ENCODE measurements at regions of chr19 and their contacts with region 1.

Region 1: DNA sequence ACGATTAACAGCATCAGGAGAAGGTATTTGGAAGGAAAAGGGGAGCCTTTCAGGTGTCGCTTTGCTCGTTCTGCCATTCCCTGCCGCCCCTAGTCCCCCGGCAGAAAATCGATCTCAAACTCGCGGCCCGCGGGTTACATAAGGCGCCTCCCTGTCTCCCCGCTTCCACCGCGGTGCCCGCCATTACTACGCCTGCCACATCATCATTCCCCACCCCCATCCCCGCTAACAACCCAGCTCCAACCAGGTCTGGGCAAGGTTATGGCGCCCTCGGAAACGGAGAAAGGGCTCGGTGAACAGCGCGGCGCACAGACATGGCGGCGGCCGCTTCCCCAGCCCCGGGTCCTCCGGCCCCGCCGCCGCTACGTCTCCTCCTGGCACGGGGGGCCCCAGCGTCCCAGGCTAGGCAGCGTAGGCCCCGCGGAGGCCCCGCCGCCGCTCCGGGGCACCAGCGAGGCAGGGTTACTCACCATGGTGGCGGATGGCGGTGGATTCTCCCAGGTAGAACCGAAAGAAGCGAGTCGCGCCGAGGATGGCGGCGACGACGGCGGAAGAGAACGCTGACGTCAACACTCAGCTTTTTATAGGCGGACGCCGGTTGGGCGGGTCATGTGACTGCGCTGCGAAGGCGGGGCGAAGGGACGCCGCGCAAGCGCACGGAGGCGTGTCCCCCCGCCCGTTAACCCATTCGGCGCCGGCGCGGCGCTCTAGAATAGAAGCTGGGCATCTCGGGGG is at the start of gene EEF2:
- DNase-seq: peak; percentile 82 to 96 (median 90)
- ATAC-seq: peak; percentile 54
- H3K4me3 ChIP-seq: peak within 1 kb of the TSS; percentile 70 to 78
- H3K4me3 Mint-ChIP-seq: peak within 1 kb of the TSS; percentile 92
- H3K27ac ChIP-seq: peak within 1 kb of the TSS; percentile 83 to 85
- H3K27ac Mint-ChIP-seq: peak within 1 kb of the TSS; percentile 97
- H3K4me1 ChIP-seq: peaks cover 52% of the 10 kb centered on the region
- H3K4me1 Mint-ChIP-seq: peaks cover 57% of the 10 kb centered on the region
- H3K27me3 ChIP-seq: no peaks in the 10 kb centered on the region
- H3K27me3 Mint-ChIP-seq: no peaks in the 10 kb centered on the region
- CTCF ChIP-seq: no peak
- total RNA-seq, gene EEF2: 2,844 to 2,933 TPM

Region 2: DNA sequence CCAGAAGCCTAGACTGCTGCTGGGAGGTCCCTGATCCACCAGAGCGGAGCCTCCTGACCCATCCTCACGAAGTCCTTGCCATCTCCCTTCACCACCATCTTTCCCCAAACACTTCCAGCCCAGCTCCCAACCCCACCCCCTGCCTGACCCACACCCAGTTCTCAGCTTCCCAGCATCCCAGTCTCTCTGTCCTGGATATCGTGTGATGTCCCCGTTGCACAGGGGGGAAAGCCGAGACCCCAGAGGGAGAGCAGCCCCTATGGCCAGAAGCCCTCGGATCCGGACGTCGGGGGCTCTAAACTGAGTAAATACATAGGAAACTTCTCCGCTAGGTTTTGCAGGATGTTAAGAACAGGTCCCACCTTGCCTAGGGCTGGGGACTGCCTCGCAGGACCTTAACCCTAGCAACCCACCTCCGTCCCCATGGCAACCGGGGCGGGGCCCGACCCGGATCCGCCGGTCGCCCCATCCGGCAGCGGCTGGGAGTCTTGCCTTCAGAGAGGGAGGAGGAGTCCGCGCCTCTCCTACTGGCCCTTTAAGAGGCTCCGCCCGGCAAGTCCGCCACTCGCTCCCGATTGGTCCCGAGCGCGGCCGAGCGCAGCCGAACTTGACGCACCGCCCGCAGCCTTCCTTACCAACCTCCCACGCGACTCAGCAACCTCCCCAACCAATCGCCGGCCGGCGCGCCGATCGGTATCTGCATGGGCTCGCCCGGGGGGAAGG is 412.8 kb before region 1 on chr19:
- CTCF ChIA-PET with region 1: no interaction called
- POLR2A ChIA-PET with region 1: no interaction called
- intact Hi-C with region 1: loop called (anchors 5 kb)
- DNase-seq: peak; percentile 98 to 100 (median 99)
- ATAC-seq: peak; percentile 95
- H3K4me3 ChIP-seq: peak overlapping the region; percentile 66 to 68
- H3K4me3 Mint-ChIP-seq: peak overlapping the region; percentile 77
- H3K27ac ChIP-seq: peak overlapping the region; percentile 60 to 65
- H3K27ac Mint-ChIP-seq: no peak overlapping the region
- H3K4me1 ChIP-seq: peaks cover 15% of the 10 kb centered on the region
- H3K4me1 Mint-ChIP-seq: peaks cover 18% of the 10 kb centered on the region
- H3K27me3 ChIP-seq: no peaks in the 10 kb centered on the region
- H3K27me3 Mint-ChIP-seq: no peaks in the 10 kb centered on the region
- CTCF ChIP-seq: no peak

Region 3: GRCh38 chr19:3801412-3802096 is 183.5 kb before region 1 on chr19:
- CTCF ChIA-PET with region 1: no interaction called
- POLR2A ChIA-PET with region 1: no interaction called
- intact Hi-C with region 1: no loop called
- DNase-seq: peak; percentile 38 to 84 (median 66)
- ATAC-seq: peak; percentile 69
- H3K4me3 ChIP-seq: peak overlapping the region; percentile 39 to 60
- H3K4me3 Mint-ChIP-seq: peak overlapping the region; percentile 56
- H3K27ac ChIP-seq: no peak overlapping the region
- H3K27ac Mint-ChIP-seq: peak overlapping the region; percentile 22
- H3K4me1 ChIP-seq: peaks cover 49% of the 10 kb centered on the region
- H3K4me1 Mint-ChIP-seq: peaks cover 43% of the 10 kb centered on the region
- H3K27me3 ChIP-seq: no peaks in the 10 kb centered on the region
- H3K27me3 Mint-ChIP-seq: no peaks in the 10 kb centered on the region
- CTCF ChIP-seq: no peak

Region 4: DNA sequence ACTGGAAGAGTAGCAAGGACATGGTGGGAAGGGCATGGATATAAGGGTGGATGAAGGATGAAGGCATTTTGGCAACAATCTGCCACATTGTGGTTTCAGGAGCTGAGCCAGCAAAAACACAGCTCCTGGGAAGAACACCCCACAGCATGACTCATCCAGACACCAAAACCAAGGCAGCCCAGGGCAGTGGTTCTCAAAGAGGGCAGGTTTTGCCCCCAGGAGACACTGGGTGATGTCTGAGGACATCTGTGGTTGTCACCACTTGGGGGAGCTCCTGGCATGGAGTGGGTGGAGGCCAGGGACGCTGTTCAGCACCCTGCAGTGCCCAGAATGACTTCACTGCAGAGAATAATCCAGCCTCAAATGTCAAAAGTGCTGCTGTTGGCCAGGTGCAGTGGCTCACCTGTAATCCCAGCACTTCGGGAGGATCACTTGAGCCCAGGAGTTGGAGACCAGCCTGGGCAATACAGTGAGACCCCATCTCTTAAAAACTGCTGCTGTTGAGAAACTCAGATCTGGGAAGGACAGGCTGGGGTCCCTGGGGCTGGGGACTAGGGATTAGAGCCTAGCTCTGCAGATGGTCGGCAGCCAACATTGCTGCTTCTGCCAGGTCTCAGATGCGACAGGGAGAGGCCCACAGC is 132.3 kb before region 1 on chr19:
- CTCF ChIA-PET with region 1: no interaction called
- POLR2A ChIA-PET with region 1: no interaction called
- intact Hi-C with region 1: loop called in 1 of 2 experiments (anchors 2 kb)
- DNase-seq: peak in 8 of 9 experiments; percentile 27 to 68 (median 54)
- ATAC-seq: peak; percentile 57
- H3K4me3 ChIP-seq: no peak overlapping the region
- H3K4me3 Mint-ChIP-seq: no peak overlapping the region
- H3K27ac ChIP-seq: no peak overlapping the region
- H3K27ac Mint-ChIP-seq: no peak overlapping the region
- H3K4me1 ChIP-seq: no peaks in the 10 kb centered on the region
- H3K4me1 Mint-ChIP-seq: no peaks in the 10 kb centered on the region
- H3K27me3 ChIP-seq: no peaks in the 10 kb centered on the region
- H3K27me3 Mint-ChIP-seq: no peaks in the 10 kb centered on the region
- CTCF ChIP-seq: peak; percentile 37

Region 5: DNA sequence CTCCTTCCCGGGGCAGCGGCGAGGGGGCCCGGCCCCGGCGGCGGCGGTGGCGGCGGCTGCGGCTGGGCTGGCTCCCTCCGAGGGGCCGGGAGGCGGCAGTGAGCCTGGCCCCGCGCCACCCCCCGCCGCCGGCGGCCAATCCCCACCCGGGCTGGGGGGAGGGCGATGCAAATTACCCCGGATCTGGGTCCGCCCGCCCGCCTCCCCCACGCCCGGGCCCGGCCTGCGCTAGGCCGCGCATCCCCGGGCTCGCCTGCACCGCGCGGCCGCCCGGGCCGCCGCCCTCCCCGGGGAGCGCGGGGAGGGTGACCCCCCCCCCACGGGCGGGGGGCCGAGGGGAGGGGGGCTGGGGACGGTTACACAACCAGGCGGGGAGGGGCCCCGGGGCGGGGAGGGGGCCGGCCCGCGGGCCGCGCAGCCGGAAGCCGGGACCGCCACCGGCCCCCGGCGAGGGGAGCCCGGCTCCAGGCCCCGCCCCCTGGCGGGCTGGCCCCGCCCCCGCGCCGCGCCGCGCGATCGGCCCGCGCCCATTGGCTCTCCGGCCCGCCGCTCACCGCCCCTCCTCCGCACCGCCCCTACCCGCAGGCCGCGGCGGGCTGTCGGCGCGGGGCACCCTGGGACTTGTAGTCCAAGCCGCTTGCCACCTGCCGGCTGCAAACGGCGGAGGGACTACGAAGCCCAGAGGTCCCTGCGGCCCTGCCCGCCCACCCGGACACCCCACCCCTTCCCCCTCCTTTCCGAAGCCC is 80.5 kb after region 1 on chr19:
- CTCF ChIA-PET with region 1: interaction called, 7 read pairs
- POLR2A ChIA-PET with region 1: interaction called, 6 read pairs
- intact Hi-C with region 1: loop called (anchors 1 kb)
- DNase-seq: peak; percentile 94 to 99 (median 97)
- ATAC-seq: peak; percentile 72
- H3K4me3 ChIP-seq: peak overlapping the region; percentile 86 to 89
- H3K4me3 Mint-ChIP-seq: peak overlapping the region; percentile 73
- H3K27ac ChIP-seq: no peak overlapping the region
- H3K27ac Mint-ChIP-seq: no peak overlapping the region
- H3K4me1 ChIP-seq: peaks cover 58% of the 10 kb centered on the region
- H3K4me1 Mint-ChIP-seq: peaks cover 40% of the 10 kb centered on the region
- H3K27me3 ChIP-seq: no peaks in the 10 kb centered on the region
- H3K27me3 Mint-ChIP-seq: no peaks in the 10 kb centered on the region
- CTCF ChIP-seq: no peak

Region 6: DNA sequence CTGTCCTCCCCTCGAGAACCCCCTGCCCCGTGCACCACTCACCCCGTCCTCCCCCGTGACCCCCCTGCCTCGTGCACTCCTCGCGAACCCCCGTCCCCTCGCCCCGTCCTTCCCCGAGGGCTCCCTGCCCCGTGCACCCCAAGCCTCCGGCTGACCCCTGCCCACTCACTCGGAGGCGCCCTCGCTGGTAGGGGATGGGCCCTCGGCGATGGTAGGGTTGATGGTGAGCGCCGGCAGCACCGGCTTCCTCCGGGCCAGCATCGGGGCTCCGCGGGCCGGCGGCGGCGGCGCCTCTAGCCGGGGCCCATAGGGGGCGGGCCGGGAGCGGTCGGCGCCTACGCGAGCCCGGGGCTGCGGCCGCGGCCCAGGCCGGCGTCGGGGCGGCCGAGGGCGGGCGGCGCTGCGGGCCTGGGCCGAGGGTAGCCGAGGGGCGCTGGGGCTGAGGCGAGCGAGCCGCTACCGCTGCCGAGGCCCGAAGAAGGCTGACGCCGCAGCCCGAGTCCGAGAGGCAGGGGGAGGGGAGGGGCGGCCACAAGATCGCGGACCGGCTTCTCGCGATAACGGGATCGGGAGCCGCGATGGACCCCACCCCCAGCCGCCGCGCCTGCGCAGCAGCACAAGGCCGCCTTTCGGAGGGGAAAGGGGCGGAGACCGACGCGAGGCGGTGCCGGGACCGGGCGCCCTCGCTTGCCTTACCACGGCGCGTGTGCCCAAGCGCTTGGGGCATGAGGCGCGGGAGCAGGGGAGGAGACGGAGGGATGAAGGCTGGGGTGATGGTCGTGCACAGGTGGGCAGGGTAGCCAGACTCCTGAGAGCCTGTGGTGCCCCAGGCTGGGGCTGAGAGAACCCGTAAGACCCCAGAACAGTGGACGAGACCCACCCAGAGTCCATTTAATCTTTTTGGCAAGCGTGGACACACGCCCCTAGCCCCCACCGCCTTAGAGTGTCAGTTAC is 138.8 kb after region 1 on chr19 and contains the start of gene MAP2K2:
- CTCF ChIA-PET with region 1: interaction called, 4 read pairs
- POLR2A ChIA-PET with region 1: no interaction called
- intact Hi-C with region 1: loop called (anchors 1 kb)
- DNase-seq: peak; percentile 91 to 98 (median 97)
- ATAC-seq: peak; percentile 96
- H3K4me3 ChIP-seq: peak within 1 kb of the TSS; percentile 57 to 72
- H3K4me3 Mint-ChIP-seq: peak within 1 kb of the TSS; percentile 93
- H3K27ac ChIP-seq: peak within 1 kb of the TSS; percentile 52 to 73
- H3K27ac Mint-ChIP-seq: peak within 1 kb of the TSS; percentile 91
- H3K4me1 ChIP-seq: peaks cover 17% of the 10 kb centered on the region
- H3K4me1 Mint-ChIP-seq: peaks cover 25% of the 10 kb centered on the region
- H3K27me3 ChIP-seq: no peaks in the 10 kb centered on the region
- H3K27me3 Mint-ChIP-seq: no peaks in the 10 kb centered on the region
- CTCF ChIP-seq: no peak
- total RNA-seq, gene MAP2K2: 73.9 to 76.8 TPM

Region 7: DNA sequence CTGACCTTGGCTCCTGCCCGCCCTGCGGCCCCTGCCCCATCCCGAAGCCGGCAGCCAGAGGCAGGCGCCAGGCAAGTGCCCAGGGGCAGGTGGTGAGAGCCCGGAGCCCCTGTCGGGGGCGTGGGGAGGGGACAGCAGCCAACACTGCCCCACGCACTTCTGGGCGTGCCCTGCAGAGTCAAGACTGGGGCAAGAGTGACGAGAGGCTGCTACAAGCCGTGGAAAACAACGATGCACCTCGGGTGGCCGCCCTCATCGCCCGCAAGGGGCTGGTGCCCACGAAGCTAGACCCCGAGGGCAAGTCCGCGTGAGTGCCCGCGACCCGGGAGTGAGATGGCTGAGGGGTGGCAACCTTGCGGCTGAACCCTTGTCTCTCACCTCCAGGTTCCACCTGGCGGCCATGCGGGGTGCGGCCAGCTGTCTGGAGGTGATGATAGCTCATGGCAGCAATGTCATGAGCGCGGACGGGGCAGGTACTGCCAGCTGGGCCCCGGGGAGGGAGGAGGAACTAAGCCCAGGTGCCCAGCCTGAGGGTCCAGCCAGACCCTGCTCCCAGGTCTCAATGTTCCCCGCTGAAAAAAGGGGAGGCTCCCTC is 214.7 kb after region 1 on chr19:
- CTCF ChIA-PET with region 1: interaction called, 29 read pairs
- POLR2A ChIA-PET with region 1: interaction called, 3 read pairs
- intact Hi-C with region 1: loop called in 1 of 2 experiments (anchors 1 kb)
- DNase-seq: no peak
- ATAC-seq: no peak
- H3K4me3 ChIP-seq: no peak overlapping the region
- H3K4me3 Mint-ChIP-seq: no peak overlapping the region
- H3K27ac ChIP-seq: no peak overlapping the region
- H3K27ac Mint-ChIP-seq: no peak overlapping the region
- H3K4me1 ChIP-seq: peaks cover 5% of the 10 kb centered on the region
- H3K4me1 Mint-ChIP-seq: peaks cover 12% of the 10 kb centered on the region
- H3K27me3 ChIP-seq: peaks cover 20 to 32% of the 10 kb centered on the region in 2 experiments
- H3K27me3 Mint-ChIP-seq: peaks cover 38% of the 10 kb centered on the region
- CTCF ChIP-seq: no peak

Region 8: GRCh38 chr19:4328243-4328990 is 343.3 kb after region 1 on chr19:
- CTCF ChIA-PET with region 1: no interaction called
- POLR2A ChIA-PET with region 1: interaction called, 3 read pairs
- intact Hi-C with region 1: loop called in 1 of 2 experiments (anchors 5 kb)
- DNase-seq: peak; percentile 84 to 99 (median 97)
- ATAC-seq: peak; percentile 95
- H3K4me3 ChIP-seq: peak overlapping the region; percentile 53 to 81
- H3K4me3 Mint-ChIP-seq: peak overlapping the region; percentile 80
- H3K27ac ChIP-seq: peak overlapping the region in 1 of 2 experiments; percentile 55
- H3K27ac Mint-ChIP-seq: peak overlapping the region; percentile 92
- H3K4me1 ChIP-seq: peaks cover 20% of the 10 kb centered on the region
- H3K4me1 Mint-ChIP-seq: peaks cover 27% of the 10 kb centered on the region
- H3K27me3 ChIP-seq: no peaks in the 10 kb centered on the region
- H3K27me3 Mint-ChIP-seq: no peaks in the 10 kb centered on the region
- CTCF ChIP-seq: no peak